ENCODE measurements at regions of chr11 and their contacts with region 1.

Region 1: GRCh38 chr11:110524238-110524637 is 94.5 kb downstream of the FDX1 start:
- DNase-seq: no peak
- H3K4me3 ChIP-seq: no peak overlapping the region
- CTCF ChIP-seq: no peak

Region 2: GRCh38 chr11:110587972-110588371 is 63.7 kb after region 1 on chr11:
- in situ Hi-C with region 1: loop called (anchors 5 kb)
- DNase-seq: no peak
- H3K4me3 ChIP-seq: no peak overlapping the region
- CTCF ChIP-seq: no peak